ENCODE measurements at regions of chr2 and their contacts with region 1.

Region 1: DNA sequence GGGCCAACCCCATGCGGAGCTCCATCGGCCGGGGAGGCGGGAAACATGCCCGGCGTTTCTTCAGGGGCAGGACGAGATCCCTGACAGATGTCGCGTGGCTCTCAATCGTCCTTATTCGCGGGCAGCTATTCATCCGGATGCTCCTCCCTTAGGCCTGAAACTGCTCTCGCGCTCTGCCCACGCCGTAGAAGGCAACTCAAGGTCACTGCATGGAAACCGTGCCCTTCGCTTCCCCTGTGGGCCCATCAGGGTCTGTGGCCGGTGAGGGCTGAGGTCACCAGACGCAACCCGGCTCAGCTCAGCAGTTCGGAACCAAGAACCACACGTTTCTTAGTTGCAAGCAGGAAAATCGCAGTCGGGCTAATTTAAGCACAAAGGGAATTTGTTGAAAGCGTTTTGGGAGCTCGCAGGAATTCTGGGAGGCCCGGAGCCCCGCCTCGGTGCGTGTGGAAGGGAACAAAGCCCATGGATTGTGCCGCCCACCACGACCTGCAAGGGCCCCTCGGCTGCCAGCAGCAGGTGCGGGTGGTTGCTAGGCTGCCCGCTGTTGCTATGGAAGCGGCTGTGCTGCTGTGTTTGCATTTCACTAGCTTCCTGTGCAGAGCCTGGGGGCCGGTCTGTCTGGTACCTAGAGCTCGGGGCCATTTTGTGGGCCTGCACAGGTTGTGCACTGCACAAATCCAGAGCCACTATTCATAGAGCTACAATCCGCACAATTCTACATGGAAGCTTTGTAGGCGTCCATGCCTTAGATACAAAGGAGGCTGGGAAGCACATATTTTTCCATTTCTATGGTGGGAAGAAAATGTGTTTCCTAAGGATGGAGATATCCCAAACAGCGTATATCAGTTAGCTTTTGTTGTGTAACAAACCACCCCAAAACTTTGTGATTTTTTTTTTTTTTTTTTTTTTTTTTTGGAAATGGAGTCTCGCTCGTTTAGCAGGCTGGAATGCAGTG is 6.0 kb upstream of the ALLC start:
- DNase-seq: peak; percentile 91
- H3K4me3 Mint-ChIP-seq: peak overlapping the region; percentile 86
- H3K27ac Mint-ChIP-seq: peak overlapping the region; percentile 94
- H3K4me1 Mint-ChIP-seq: peaks cover 12% of the 10 kb centered on the region
- H3K27me3 Mint-ChIP-seq: peaks cover 4% of the 10 kb centered on the region

Region 2: GRCh38 chr2:2121887-2122286 is 1530.1 kb before region 1 on chr2:
- intact Hi-C with region 1: loop called (anchors 2 kb)
- DNase-seq: no peak
- H3K4me3 Mint-ChIP-seq: no peak overlapping the region
- H3K27ac Mint-ChIP-seq: no peak overlapping the region
- H3K4me1 Mint-ChIP-seq: peaks cover 3% of the 10 kb centered on the region
- H3K27me3 Mint-ChIP-seq: no peaks in the 10 kb centered on the region

Region 3: GRCh38 chr2:3379647-3380534 is 272.1 kb before region 1 on chr2 and contains the start of gene TRAPPC12:
- intact Hi-C with region 1: loop called (anchors 1 kb)
- DNase-seq: peak; percentile 99
- H3K4me3 Mint-ChIP-seq: peak within 1 kb of the TSS; percentile 99
- H3K27ac Mint-ChIP-seq: peak within 1 kb of the TSS; percentile 98
- H3K4me1 Mint-ChIP-seq: peaks cover 34% of the 10 kb centered on the region
- H3K27me3 Mint-ChIP-seq: no peaks in the 10 kb centered on the region
- total RNA-seq, gene TRAPPC12: 87.8 and 91.7 TPM in 2 replicates

Region 4: GRCh38 chr2:3461801-3462492 is 190.0 kb before region 1 on chr2:
- intact Hi-C with region 1: loop called (anchors 5 kb)
- DNase-seq: peak; percentile 84
- H3K4me3 Mint-ChIP-seq: no peak overlapping the region
- H3K27ac Mint-ChIP-seq: no peak overlapping the region
- H3K4me1 Mint-ChIP-seq: peaks cover 4% of the 10 kb centered on the region
- H3K27me3 Mint-ChIP-seq: no peaks in the 10 kb centered on the region

Region 5: GRCh38 chr2:3558205-3559014 is 93.6 kb before region 1 on chr2 and contains the start of gene RNASEH1:
- intact Hi-C with region 1: loop called (anchors 1 kb)
- DNase-seq: peak; percentile 100
- H3K4me3 Mint-ChIP-seq: peak within 1 kb of the TSS; percentile 89
- H3K27ac Mint-ChIP-seq: peak within 1 kb of the TSS; percentile 90
- H3K4me1 Mint-ChIP-seq: peaks cover 26% of the 10 kb centered on the region
- H3K27me3 Mint-ChIP-seq: no peaks in the 10 kb centered on the region
- total RNA-seq, gene RNASEH1: 27.8 and 29.8 TPM in 2 replicates

Region 6: DNA sequence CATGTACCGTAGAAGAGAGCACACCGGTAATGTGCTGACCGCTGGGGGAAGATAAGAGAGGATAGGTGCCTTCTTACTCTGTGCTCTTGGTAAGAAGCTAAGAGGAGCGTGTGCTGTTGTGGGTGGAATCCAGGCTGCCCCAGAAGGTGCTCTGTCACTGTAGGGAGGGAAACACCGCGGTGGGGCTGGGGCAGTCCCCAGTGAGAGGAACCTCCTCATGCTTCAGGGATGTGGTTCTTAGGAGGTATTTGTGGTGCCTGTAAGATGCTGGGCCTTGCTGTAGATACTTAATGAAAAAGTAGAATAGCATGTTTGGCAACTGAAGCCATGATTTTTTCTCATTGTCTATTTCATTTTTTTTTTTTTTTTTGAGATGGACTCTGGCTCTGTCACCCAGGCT is 56.0 kb before region 1 on chr2:
- intact Hi-C with region 1: loop called (anchors 1 kb)
- DNase-seq: peak; percentile 71
- H3K4me3 Mint-ChIP-seq: no peak overlapping the region
- H3K27ac Mint-ChIP-seq: no peak overlapping the region
- H3K4me1 Mint-ChIP-seq: peaks cover 11% of the 10 kb centered on the region
- H3K27me3 Mint-ChIP-seq: peaks cover 20% of the 10 kb centered on the region